B cell (primary cell): ENCODE measurements at regions of chr1 and their contacts with region 1.

Region 1: DNA sequence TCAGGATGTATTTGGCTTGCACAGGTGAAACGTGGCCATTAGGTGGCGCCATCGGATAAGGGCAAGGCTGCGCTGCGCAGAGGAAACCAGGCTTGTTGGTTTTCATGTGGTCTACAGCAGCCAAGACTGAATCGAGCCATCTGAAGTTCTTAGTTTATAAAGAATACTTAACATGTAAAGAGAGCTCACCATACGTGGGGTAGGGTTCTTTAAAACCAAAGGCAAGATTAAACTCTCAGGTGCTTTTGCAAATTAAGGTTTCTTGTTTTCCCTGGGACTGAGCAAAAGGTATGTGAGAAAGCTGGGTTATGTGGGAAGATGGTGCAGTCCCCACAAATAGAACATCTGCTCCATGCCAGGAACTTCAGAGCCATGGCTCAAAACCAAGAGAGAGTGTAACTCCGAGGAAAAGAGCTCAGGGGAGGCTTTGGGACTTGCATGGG is 9.3 kb downstream of the MASP2 start:
- DNase-seq: peak; percentile 90
- ATAC-seq: peak; percentile 98
- H3K4me3 ChIP-seq: no peak overlapping the region
- H3K4me3 Mint-ChIP-seq: no peak overlapping the region
- H3K27ac ChIP-seq: no peak overlapping the region
- H3K27ac Mint-ChIP-seq: no peak overlapping the region
- H3K4me1 ChIP-seq: peaks cover 0 to 3% of the 10 kb centered on the region in 2 donors
- H3K4me1 Mint-ChIP-seq: peaks cover 4% of the 10 kb centered on the region
- H3K27me3 ChIP-seq: peaks cover 0 to 13% (median 2%) of the 10 kb centered on the region in 4 experiments
- H3K27me3 Mint-ChIP-seq: peaks cover 7% of the 10 kb centered on the region
- CTCF ChIP-seq: peak; percentile 99

Region 2: GRCh38 chr1:10851024-10852013 is 186.4 kb before region 1 on chr1:
- CTCF ChIA-PET with region 1: no interaction called
- POLR2A ChIA-PET with region 1: no interaction called
- intact Hi-C with region 1: no loop called
- DNase-seq: no peak
- ATAC-seq: no peak
- H3K4me3 ChIP-seq: no peak overlapping the region
- H3K4me3 Mint-ChIP-seq: no peak overlapping the region
- H3K27ac ChIP-seq: no peak overlapping the region
- H3K27ac Mint-ChIP-seq: no peak overlapping the region
- H3K4me1 ChIP-seq: no peaks in the 10 kb centered on the region
- H3K4me1 Mint-ChIP-seq: no peaks in the 10 kb centered on the region
- H3K27me3 ChIP-seq: peaks cover 0 to 2% (median 0%) of the 10 kb centered on the region in 4 experiments
- H3K27me3 Mint-ChIP-seq: peaks cover 23% of the 10 kb centered on the region
- CTCF ChIP-seq: no peak

Region 3: DNA sequence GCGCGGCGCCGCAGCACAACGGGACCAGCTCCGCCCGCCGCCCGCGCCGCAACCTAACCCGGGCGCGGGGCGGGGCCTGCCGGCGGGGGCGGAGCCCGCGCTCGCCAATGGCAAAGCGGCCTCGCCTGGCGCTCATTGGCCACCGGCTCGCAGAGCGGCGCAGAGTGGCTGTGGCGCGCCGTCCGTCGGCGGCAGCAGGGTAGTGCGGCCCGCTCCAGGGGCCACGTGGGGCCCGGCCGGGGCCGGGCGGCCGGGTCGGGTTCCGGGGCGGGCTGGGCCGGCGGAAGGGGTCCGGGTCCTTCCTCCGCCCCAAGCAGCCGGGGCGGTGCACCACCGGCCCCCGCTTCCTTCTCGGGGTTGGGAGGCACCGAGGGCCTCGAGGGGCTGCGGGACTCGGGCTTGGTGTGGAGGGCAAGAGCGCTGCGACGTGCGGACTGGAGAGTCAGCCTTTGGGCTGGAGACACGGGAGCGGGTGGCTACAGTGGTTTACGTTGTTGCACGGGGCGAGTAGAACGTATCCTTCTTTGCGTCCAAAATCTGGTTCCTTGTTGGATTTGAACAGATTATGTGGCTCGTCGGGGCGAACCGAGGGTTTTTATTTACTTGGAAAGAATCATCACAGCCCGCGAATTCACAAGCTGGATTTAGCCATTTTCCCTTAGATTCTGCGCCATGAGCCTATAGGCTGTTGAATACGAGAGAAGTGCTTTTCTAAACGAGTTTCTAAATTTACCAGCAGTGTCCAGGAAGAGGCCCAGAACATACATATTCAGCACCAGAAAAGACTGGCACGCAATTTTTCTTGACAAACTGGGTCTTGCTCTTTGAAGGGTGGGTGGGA is 22.4 kb after region 1 on chr1 and contains the start of gene SRM:
- CTCF ChIA-PET with region 1: interaction called, 22 read pairs
- POLR2A ChIA-PET with region 1: interaction called, 6 read pairs
- intact Hi-C with region 1: no loop called
- DNase-seq: peak; percentile 93
- ATAC-seq: peak; percentile 98
- H3K4me3 ChIP-seq: peak within 1 kb of the TSS; percentile 73 to 93 (median 79)
- H3K4me3 Mint-ChIP-seq: peak within 1 kb of the TSS; percentile 98
- H3K27ac ChIP-seq: peak within 1 kb of the TSS; percentile 43 to 65
- H3K27ac Mint-ChIP-seq: peak within 1 kb of the TSS; percentile 92
- H3K4me1 ChIP-seq: peaks cover 16 to 19% of the 10 kb centered on the region in 2 donors
- H3K4me1 Mint-ChIP-seq: peaks cover 25% of the 10 kb centered on the region
- H3K27me3 ChIP-seq: no peaks in the 10 kb centered on the region
- H3K27me3 Mint-ChIP-seq: no peaks in the 10 kb centered on the region
- CTCF ChIP-seq: peak; percentile 37
- total RNA-seq, gene SRM: 38.9 and 39.4 TPM in 2 replicates

Region 4: GRCh38 chr1:11099310-11100149 is 61.8 kb after region 1 on chr1 and contains the start of gene EXOSC10:
- CTCF ChIA-PET with region 1: interaction called, 26 read pairs
- POLR2A ChIA-PET with region 1: no interaction called
- intact Hi-C with region 1: loop called (anchors 1 kb)
- DNase-seq: peak; percentile 94
- ATAC-seq: peak; percentile 98
- H3K4me3 ChIP-seq: peak within 1 kb of the TSS; percentile 56 to 96 (median 83)
- H3K4me3 Mint-ChIP-seq: peak within 1 kb of the TSS; percentile 96
- H3K27ac ChIP-seq: peak within 1 kb of the TSS; percentile 48 to 90
- H3K27ac Mint-ChIP-seq: peak within 1 kb of the TSS; percentile 98
- H3K4me1 ChIP-seq: peaks cover 11 to 15% of the 10 kb centered on the region in 2 donors
- H3K4me1 Mint-ChIP-seq: peaks cover 18% of the 10 kb centered on the region
- H3K27me3 ChIP-seq: no peaks in the 10 kb centered on the region
- H3K27me3 Mint-ChIP-seq: no peaks in the 10 kb centered on the region
- CTCF ChIP-seq: no peak
- total RNA-seq, gene EXOSC10: 118 and 119 TPM in 2 replicates

Region 5: DNA sequence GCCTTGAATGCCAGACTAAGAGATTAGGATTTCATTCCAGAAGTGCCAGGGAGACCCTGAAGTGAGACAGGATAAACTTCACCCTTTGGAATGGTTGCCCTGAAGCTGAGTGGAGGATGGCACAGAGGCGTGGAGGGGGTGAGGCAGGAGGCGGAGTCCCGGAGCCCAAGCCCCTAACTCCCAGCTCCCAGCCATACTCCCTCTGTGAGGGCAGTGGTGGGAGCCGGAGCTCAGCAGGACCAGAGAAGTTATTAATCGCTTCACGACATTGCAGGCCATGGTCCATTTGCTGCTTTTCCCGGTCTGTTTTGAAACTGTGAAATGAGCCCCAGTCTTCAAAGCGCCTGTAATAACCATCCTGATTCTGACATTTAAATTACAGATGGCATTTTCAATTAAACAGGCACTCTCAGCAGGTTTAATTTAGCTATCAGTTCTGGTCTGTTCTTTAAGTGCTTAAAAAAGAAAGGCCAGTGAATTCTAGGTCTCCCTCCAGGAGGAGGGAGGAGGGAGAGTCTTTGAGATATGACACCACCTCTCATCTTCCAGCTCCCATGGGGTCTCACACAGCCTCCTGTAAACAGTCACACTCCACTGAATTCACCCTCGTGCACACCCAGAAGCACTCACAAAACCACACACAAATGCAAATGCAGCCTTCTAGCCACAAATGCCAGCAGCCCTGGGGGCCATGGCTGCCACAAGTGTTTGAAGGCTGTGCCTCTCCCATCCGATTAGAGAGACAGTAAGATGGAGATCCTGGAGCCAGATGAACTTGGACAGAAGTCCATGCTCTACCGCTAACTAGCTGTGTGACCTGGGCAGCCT is 596.8 kb after region 1 on chr1:
- CTCF ChIA-PET with region 1: interaction called, 16 read pairs
- POLR2A ChIA-PET with region 1: no interaction called
- intact Hi-C with region 1: no loop called
- DNase-seq: peak; percentile 33
- ATAC-seq: peak; percentile 56
- H3K4me3 ChIP-seq: no peak overlapping the region
- H3K4me3 Mint-ChIP-seq: peak overlapping the region; percentile 44
- H3K27ac ChIP-seq: no peak overlapping the region
- H3K27ac Mint-ChIP-seq: peak overlapping the region; percentile 20
- H3K4me1 ChIP-seq: peaks cover 6 to 8% of the 10 kb centered on the region in 2 donors
- H3K4me1 Mint-ChIP-seq: peaks cover 14% of the 10 kb centered on the region
- H3K27me3 ChIP-seq: peaks cover 0 to 18% (median 0%) of the 10 kb centered on the region in 4 experiments
- H3K27me3 Mint-ChIP-seq: peaks cover 29% of the 10 kb centered on the region
- CTCF ChIP-seq: no peak

Region 6: GRCh38 chr1:11719313-11720032 is 681.7 kb after region 1 on chr1:
- CTCF ChIA-PET with region 1: interaction called, 24 read pairs
- POLR2A ChIA-PET with region 1: no interaction called
- intact Hi-C with region 1: loop called (anchors 1 kb)
- DNase-seq: peak; percentile 91
- ATAC-seq: peak; percentile 88
- H3K4me3 ChIP-seq: peak overlapping the region in 4 of 5 experiments; percentile 43 to 67 (median 63)
- H3K4me3 Mint-ChIP-seq: peak overlapping the region; percentile 72
- H3K27ac ChIP-seq: peak overlapping the region; percentile 54 to 73
- H3K27ac Mint-ChIP-seq: peak overlapping the region; percentile 96
- H3K4me1 ChIP-seq: peaks cover 8 to 13% of the 10 kb centered on the region in 2 donors
- H3K4me1 Mint-ChIP-seq: peaks cover 13% of the 10 kb centered on the region
- H3K27me3 ChIP-seq: no peaks in the 10 kb centered on the region
- H3K27me3 Mint-ChIP-seq: no peaks in the 10 kb centered on the region
- CTCF ChIP-seq: peak; percentile 95